ENCODE measurements at regions of chr17 and their contacts with region 1.

Region 1: GRCh38 chr17:62968445-62968923 is 2.4 kb downstream of the TANC2 start:
- DNase-seq: peak; percentile 87
- H3K4me3 ChIP-seq: peak overlapping the region; percentile 77 to 90
- H3K27ac ChIP-seq: peak overlapping the region; percentile 51 to 92
- H3K4me1 ChIP-seq: peaks cover 4 to 32% of the 10 kb centered on the region in 2 experiments; a peak in 3 of 4 replicates
- H3K27me3 ChIP-seq: no peaks in the 10 kb centered on the region
- CTCF ChIP-seq: peak; percentile 99
- EP300 ChIP-seq: peak in 1 of 2 experiments; percentile 58; a peak in 1 of 4 replicates
- RAD21 ChIP-seq: peak; percentile 99

Region 2: DNA sequence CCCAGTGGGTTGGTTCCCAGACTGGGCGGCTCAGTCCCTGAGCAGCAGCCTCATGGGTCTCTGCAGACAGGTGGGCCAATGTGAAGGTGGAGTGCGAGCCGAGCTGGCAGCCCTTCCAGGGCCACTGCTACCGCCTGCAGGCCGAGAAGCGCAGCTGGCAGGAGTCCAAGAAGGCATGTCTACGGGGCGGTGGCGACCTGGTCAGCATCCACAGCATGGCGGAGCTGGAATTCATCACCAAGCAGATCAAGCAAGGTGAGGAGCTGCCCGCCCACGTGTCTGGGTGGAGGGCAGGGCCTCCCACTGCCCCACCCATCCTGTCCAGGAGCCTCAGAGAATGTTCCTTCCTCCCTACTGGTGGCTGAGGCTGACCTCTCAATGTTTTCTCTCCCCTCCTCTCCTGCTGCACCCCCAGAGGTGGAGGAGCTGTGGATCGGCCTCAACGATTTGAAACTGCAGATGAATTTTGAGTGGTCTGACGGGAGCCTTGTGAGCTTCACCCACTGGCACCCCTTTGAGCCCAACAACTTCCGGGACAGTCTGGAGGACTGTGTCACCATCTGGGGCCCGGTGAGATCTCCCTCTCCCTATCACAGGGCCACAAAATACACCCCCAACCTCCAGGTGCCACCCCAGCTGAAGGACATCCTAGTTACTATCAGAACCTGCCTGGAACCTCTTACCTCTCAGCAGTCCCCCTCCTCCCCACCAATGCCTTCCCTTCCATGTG is 296.7 kb before region 1 on chr17:
- CTCF ChIA-PET with region 1: interaction called, 15 read pairs
- POLR2A ChIA-PET with region 1: no interaction called
- DNase-seq: peak; percentile 62
- H3K4me3 ChIP-seq: no peak overlapping the region
- H3K27ac ChIP-seq: peak overlapping the region in 1 of 2 experiments; percentile 16; a peak in 1 of 4 replicates
- H3K4me1 ChIP-seq: peaks cover 0 to 20% of the 10 kb centered on the region in 2 experiments; a peak in 1 of 4 replicates
- H3K27me3 ChIP-seq: no peaks in the 10 kb centered on the region
- CTCF ChIP-seq: no peak
- EP300 ChIP-seq: no peak
- RAD21 ChIP-seq: no peak

Region 3: DNA sequence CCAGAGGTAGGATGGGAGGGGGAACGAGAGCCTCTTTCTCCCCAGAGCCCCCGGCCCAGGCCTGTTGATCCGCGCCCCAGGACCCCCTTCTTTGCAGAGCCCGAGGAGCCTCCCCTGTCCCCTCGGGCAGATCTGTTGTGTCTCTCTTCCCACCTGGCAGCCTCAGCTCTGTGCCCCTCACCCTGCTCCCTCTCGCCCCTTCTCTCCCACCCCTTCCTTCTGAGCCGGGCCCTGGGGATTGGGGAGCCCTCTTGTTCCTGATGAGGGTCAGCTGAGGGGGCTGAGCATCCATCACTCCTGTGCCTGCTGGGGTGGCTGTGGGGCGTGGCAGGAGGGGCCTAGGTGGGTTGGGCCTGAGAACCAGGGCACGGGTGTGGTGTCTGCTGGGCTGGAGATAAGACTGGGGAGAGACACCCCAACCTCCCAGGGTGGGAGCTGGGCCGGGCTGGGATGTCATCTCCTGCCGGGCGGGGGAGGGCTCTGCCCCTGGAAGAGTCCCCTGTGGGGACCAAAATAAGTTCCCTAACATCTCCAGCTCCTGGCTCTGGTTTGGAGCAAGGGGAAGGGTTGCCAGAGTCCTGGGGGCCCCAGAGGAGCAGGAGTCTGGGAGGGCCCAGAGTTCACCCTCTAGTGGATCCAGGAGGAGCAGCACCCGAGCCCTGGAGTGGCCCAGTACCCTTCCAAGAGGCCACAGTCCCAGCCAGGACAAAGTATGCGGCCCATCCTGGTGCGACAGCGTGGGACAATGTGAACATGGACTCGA is 275.6 kb before region 1 on chr17:
- CTCF ChIA-PET with region 1: interaction called, 26 read pairs
- POLR2A ChIA-PET with region 1: no interaction called
- DNase-seq: peak; percentile 82
- H3K4me3 ChIP-seq: no peak overlapping the region
- H3K27ac ChIP-seq: no peak overlapping the region; a peak in 1 of 4 replicates
- H3K4me1 ChIP-seq: peaks cover 0 to 24% of the 10 kb centered on the region in 2 experiments; a peak in 1 of 4 replicates
- H3K27me3 ChIP-seq: no peaks in the 10 kb centered on the region
- CTCF ChIP-seq: peak; percentile 62
- EP300 ChIP-seq: no peak
- RAD21 ChIP-seq: peak; percentile 45

Region 4: GRCh38 chr17:62703775-62704378 is 264.6 kb before region 1 on chr17:
- CTCF ChIA-PET with region 1: interaction called, 61 read pairs
- POLR2A ChIA-PET with region 1: interaction called, 3 read pairs
- DNase-seq: peak; percentile 96
- H3K4me3 ChIP-seq: peak overlapping the region; percentile 67 to 73
- H3K27ac ChIP-seq: peak overlapping the region; percentile 69 to 85
- H3K4me1 ChIP-seq: peaks cover 15 to 29% of the 10 kb centered on the region in 2 experiments; a peak in 3 of 4 replicates
- H3K27me3 ChIP-seq: no peaks in the 10 kb centered on the region
- CTCF ChIP-seq: peak; percentile 82
- EP300 ChIP-seq: no peak; a peak in 1 of 4 replicates
- RAD21 ChIP-seq: peak; percentile 95

Region 5: DNA sequence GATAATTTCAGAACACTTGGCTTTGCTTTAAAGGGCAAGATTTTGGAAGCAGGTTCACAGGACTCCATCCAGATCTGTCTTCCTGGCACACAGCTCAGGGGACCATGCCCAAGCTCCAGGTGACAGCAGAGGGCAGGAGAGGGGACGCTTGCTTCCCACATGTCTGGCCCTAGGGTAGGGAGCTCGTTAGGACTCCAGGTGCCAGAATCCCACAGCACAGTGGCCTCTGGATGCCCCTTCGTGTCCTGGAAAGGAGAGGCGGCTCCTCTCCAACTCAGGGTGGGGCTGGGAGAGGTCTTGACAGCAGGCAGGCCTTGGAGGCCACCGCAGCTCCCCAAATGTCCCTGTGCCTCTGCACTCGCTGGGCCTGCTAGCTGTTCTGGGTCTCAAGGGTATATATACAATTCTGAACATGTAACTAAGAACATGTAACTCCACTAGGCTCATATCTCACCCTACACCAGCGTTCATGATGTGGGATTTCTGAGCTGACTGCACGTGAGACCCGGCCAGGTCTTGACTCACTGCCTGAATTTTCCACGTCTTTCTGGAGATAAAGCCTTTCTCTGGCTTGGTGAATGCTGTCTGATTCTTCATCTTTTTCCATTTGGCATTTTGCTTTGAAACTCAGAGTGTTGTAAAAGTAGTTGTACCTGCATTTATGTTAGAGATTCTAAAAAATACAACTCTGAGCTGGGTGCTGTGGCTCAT is 213.2 kb before region 1 on chr17:
- CTCF ChIA-PET with region 1: interaction called, 10 read pairs
- POLR2A ChIA-PET with region 1: interaction called, 3 read pairs
- DNase-seq: peak; percentile 49
- H3K4me3 ChIP-seq: no peak overlapping the region
- H3K27ac ChIP-seq: peak overlapping the region in 1 of 2 experiments; percentile 39; a peak in 1 of 4 replicates
- H3K4me1 ChIP-seq: peaks cover 8 to 32% of the 10 kb centered on the region in 2 experiments; a peak in 2 of 4 replicates
- H3K27me3 ChIP-seq: no peaks in the 10 kb centered on the region
- CTCF ChIP-seq: no peak
- EP300 ChIP-seq: no peak
- RAD21 ChIP-seq: peak; percentile 39; the same call in 1 of the 2 replicates

Region 6: GRCh38 chr17:62767997-62768396 is 200.5 kb before region 1 on chr17:
- CTCF ChIA-PET with region 1: no interaction called
- POLR2A ChIA-PET with region 1: no interaction called
- DNase-seq: no peak
- H3K4me3 ChIP-seq: no peak overlapping the region
- H3K27ac ChIP-seq: no peak overlapping the region
- H3K4me1 ChIP-seq: no peaks in the 10 kb centered on the region
- H3K27me3 ChIP-seq: no peaks in the 10 kb centered on the region
- CTCF ChIP-seq: no peak
- EP300 ChIP-seq: no peak
- RAD21 ChIP-seq: no peak

Region 7: DNA sequence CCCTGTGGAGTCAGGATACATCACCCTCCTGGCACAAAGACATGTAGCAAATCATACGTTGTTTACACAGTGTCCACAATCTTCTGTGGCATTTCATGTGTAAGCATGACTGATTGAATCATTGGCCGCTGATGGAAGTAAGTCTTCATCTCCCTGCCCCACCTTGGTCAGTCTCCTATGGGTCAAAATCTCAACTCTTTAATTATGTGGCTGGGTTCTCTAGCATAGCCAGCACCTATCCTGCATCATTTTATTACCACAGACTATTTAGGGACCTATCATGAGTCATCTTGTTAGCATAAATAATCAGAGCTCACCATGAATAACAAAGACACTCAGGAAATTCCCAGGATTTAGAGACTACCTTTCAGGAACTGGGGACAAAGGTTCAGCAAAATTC is 13.4 kb after region 1 on chr17:
- CTCF ChIA-PET with region 1: interaction called, 26 read pairs
- POLR2A ChIA-PET with region 1: no interaction called
- DNase-seq: no peak
- H3K4me3 ChIP-seq: no peak overlapping the region
- H3K27ac ChIP-seq: no peak overlapping the region
- H3K4me1 ChIP-seq: peaks cover 0 to 10% of the 10 kb centered on the region in 2 experiments; a peak in 1 of 4 replicates
- H3K27me3 ChIP-seq: no peaks in the 10 kb centered on the region
- CTCF ChIP-seq: no peak
- EP300 ChIP-seq: no peak
- RAD21 ChIP-seq: no peak

Measured in SK-N-SH (cell line).